G401 (cell line): ENCODE measurements at regions of chr4 and their contacts with region 1.

Region 1: GRCh38 chr4:26719954-26720552 is 136.2 kb downstream of the TBC1D19 start:
- DNase-seq: peak; percentile 12

Region 2: DNA sequence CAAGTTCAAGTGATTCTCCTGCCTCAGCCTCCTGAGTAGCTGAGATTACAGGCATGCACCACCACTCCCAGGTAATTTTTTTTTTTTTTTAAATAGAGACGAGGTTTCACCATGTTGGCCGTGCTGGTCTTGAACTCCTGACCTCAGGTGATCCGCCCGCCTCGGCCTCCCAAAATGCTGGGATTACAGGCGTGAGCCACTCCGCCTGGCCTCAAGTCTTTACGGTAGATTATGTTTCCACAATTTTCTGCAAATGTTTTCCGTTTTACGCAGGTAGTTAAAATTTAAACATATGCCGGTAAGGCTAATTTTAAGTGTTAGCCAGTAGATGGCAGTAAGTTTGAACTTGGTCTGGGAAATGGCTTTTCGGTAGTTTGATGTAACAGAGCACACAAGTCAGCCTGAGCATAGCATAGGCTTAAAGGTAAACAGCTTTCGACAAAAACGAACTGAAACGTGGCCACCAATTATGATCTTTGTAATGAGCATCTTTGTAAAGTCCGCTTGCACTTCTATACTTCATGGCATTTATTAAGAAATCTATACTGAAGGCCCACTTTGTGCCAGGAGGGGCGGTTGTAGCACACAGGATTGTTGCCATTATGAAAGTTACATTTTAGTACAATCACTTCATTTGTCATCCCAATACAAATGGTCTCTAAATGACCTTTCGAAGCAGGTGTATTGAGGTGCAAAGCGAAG is 260.8 kb before region 1 on chr4:
- in situ Hi-C with region 1: loop called (anchors 25 kb)
- DNase-seq: peak; percentile 52

Region 3: GRCh38 chr4:27010334-27010940 is 290.4 kb after region 1 on chr4:
- in situ Hi-C with region 1: loop called (anchors 25 kb)
- DNase-seq: peak; percentile 71